GM13977 (cell line): ENCODE measurements at regions of chr1 and their contacts with region 1.

Region 1: DNA sequence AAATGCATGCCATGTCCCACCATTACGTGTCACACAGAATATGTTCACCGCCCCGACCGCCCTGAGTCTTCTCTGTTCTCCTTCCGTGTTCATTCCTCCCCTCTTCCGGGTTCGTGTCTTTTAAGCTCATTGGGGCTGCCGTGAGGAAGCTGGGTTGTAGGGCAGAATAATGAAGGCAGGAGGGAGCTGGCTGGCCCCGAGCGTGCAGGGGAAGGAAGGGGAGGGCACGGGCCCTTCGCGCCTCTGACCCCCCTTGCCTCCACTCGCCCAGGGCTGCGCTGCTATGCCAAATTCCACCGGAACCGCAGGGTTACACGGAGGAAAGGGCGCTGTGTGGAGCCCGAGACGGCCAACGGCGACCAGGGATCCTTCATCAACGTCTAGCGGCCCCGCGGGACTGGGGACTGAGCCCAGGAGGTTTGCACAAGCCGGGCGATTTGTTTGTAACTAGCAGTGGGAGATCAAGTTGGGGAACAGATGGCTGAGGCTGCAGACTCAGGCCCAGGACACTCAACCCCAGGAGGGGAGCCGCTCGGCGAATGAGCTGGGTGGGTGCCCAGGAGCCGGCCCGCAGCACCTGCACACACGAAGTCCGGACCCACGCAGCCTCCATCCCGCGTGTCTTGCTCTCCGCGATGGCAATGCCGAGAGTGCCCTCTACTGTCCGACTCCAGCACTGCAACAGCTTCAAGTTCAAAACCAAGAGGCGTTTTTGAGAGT is 16.5 kb upstream of the AGTRAP start:
- DNase-seq: peak; percentile 78
- CTCF ChIP-seq: peak; percentile 97

Region 2: GRCh38 chr1:11661103-11661502 is 58.4 kb before region 1 on chr1:
- in situ Hi-C with region 1: loop called (anchors 10 kb)
- DNase-seq: no peak
- CTCF ChIP-seq: no peak